Heart right ventricle (tissue), 16 donors: ENCODE measurements at regions of chr6 and their contacts with region 1.

Region 1: GRCh38 chr6:129730477-129731165 is 20.6 kb upstream of the ARHGAP18 start:
- DNase-seq: no peak
- ATAC-seq: peak in 4 of 8 donors; percentile 42 to 59 (median 54)
- H3K4me3 ChIP-seq: no peak overlapping the region
- H3K27ac ChIP-seq: no peak overlapping the region
- H3K4me1 ChIP-seq: peaks cover 0 to 15% (median 0%) of the 10 kb centered on the region in 9 donors
- H3K27me3 ChIP-seq: no peaks in the 10 kb centered on the region
- CTCF ChIP-seq: peak; percentile 16 to 69 (median 61)

Region 2: GRCh38 chr6:129621247-129621646 is 109.4 kb before region 1 on chr6:
- intact Hi-C with region 1: loop called in 2 of 10 experiments (anchors 5 kb)
- DNase-seq: no peak
- ATAC-seq: no peak
- H3K4me3 ChIP-seq: no peak overlapping the region
- H3K27ac ChIP-seq: no peak overlapping the region
- H3K4me1 ChIP-seq: peaks cover 0 to 8% (median 0%) of the 10 kb centered on the region in 9 donors
- H3K27me3 ChIP-seq: no peaks in the 10 kb centered on the region
- CTCF ChIP-seq: peak in 6 of 9 donors; percentile 21 to 43 (median 34)

Region 3: GRCh38 chr6:129954749-129955431 is 224.3 kb after region 1 on chr6:
- intact Hi-C with region 1: no loop called
- DNase-seq: no peak
- ATAC-seq: no peak
- H3K4me3 ChIP-seq: no peak overlapping the region
- H3K27ac ChIP-seq: no peak overlapping the region
- H3K4me1 ChIP-seq: no peaks in the 10 kb centered on the region
- H3K27me3 ChIP-seq: no peaks in the 10 kb centered on the region
- CTCF ChIP-seq: no peak

Region 4: DNA sequence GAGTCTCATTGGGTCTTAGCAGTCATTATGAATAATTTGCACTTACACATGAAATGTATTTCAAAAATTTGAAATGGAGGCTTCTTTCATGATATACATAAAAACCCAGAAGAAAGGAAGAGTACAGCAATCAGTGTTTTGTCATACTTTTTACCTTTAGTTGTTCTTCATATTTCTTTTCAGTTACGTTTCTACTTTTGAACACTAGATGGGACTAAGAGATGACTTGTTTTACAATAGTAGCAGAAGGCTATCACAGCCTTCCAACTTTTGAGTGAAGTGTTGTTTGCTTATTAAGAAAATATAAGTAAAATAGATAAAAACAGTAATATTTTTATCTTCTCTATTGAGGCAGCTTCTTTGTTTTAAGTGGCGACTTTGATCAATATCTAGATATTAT is 345.9 kb after region 1 on chr6:
- intact Hi-C with region 1: no loop called
- DNase-seq: no peak
- ATAC-seq: no peak
- H3K4me3 ChIP-seq: no peak overlapping the region
- H3K27ac ChIP-seq: no peak overlapping the region
- H3K4me1 ChIP-seq: no peaks in the 10 kb centered on the region
- H3K27me3 ChIP-seq: no peaks in the 10 kb centered on the region
- CTCF ChIP-seq: peak in 1 of 9 donors; percentile 3